ENCODE measurements at regions of chr4 and their contacts with region 1.

Region 1: DNA sequence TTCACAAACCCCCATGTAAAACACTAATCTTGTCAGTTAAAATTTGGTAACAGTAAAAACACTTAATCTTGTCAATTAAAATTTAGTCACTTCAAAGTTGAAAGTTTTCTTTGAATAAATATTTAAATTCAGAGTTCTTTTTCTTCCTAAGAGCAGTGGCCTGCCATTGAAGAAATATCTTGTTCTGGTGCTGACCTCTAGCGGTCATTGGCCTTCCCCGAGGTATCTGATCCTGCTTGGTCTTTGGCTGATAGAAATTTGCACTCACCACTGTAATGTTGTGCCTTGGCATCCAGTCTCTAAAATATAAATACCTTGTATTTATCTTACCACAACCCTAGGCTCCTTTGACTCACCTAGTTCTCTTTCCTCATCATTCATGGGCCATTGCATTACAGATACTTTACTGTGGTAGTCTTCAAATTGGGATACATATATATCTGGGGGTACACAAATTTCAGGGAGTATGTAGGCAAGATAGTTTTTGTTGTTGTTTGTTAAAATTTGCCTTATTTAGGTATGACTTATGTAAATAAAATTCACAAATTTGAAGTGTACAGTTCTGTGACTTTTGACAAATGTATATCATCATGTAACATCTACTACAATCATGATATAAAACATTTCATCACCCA is 6.7 kb upstream of the ART3 start:
- DNase-seq: peak; percentile 74 to 77
- H3K4me3 ChIP-seq: no peak overlapping the region
- H3K27ac ChIP-seq: no peak overlapping the region
- H3K4me1 ChIP-seq: no peaks in the 10 kb centered on the region
- H3K27me3 ChIP-seq: no peaks in the 10 kb centered on the region
- CTCF ChIP-seq: peak; percentile 62 to 67

Region 2: GRCh38 chr4:75895744-75896314 is 171.9 kb before region 1 on chr4:
- intact Hi-C with region 1: no loop called
- DNase-seq: no peak
- H3K4me3 ChIP-seq: no peak overlapping the region
- H3K27ac ChIP-seq: no peak overlapping the region
- H3K4me1 ChIP-seq: no peaks in the 10 kb centered on the region
- H3K27me3 ChIP-seq: no peaks in the 10 kb centered on the region
- CTCF ChIP-seq: peak; percentile 31 to 32

Region 3: DNA sequence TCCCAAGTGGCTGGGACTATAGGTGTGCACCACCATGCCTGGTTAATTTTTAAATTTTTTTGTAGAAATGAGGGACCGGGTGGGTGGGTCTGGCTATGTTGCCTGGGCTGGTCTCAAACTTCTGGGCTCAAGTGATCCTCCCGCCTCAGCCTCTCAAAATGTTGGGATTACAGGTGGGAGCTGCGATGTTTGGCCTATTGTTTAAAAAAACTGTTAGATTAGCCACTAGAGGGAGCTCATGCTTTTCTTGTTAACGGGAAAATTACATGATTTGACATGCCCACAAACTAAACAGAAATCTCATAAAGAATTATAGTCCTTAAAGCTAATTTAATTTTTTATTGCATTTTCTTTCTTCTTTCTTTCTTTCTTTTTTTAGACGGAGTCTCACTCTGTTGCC is 72.0 kb before region 1 on chr4:
- intact Hi-C with region 1: loop called (anchors 1 kb)
- DNase-seq: no peak
- H3K4me3 ChIP-seq: no peak overlapping the region
- H3K27ac ChIP-seq: no peak overlapping the region
- H3K4me1 ChIP-seq: peaks cover 0 to 4% (median 2%) of the 10 kb centered on the region in 4 donors
- H3K27me3 ChIP-seq: no peaks in the 10 kb centered on the region
- CTCF ChIP-seq: peak; percentile 55 to 57

Measured in tibial artery (tissue), 4 donors.